ENCODE measurements at regions of chr6 and their contacts with region 1.

Region 1: DNA sequence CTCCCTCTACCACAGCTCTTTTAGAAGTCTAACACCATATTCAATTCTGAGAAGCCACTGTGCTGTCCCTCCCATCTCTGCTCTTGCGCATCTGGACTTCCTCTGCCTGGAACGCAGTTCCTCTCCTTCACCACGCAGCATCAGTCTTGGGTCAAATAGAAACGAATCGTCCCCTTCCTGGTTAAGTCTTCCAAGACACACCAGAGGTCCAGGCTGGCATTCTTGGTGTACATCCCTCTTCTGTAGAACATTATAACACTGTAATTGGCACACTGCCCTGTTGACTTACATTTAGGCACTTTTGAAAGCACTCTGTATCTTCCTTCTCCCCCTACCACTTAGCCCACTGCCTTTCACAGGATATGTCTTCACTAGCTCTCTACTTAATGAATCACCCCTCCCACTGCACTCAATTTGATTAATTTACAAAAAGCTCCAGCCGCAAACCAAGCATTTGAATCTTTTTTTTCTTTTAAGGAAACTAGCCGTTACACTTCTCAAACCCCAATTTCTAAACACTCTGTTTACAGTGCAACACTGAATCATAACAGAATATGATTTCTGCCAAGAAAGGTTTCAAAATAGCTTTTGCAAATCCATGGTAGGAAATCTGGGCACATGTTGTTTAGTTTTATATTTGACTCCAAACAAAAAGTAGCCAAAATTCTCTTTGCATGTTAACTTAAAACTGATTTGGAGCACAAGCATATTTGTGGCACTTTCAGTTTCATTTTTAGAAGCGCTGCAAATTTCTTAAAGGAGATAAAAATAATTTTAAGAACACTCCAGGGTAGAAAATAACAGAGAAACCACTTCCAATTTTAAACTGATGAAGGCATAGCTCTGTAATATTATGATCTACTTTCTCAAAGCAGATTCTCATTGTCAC is 140.7 kb upstream of the CARMIL1 start:
- DNase-seq: peak; percentile 71
- H3K4me3 Mint-ChIP-seq: peak overlapping the region; percentile 92
- H3K27ac Mint-ChIP-seq: peak overlapping the region; percentile 100
- H3K4me1 Mint-ChIP-seq: peaks cover 39% of the 10 kb centered on the region
- H3K27me3 Mint-ChIP-seq: no peaks in the 10 kb centered on the region

Region 2: DNA sequence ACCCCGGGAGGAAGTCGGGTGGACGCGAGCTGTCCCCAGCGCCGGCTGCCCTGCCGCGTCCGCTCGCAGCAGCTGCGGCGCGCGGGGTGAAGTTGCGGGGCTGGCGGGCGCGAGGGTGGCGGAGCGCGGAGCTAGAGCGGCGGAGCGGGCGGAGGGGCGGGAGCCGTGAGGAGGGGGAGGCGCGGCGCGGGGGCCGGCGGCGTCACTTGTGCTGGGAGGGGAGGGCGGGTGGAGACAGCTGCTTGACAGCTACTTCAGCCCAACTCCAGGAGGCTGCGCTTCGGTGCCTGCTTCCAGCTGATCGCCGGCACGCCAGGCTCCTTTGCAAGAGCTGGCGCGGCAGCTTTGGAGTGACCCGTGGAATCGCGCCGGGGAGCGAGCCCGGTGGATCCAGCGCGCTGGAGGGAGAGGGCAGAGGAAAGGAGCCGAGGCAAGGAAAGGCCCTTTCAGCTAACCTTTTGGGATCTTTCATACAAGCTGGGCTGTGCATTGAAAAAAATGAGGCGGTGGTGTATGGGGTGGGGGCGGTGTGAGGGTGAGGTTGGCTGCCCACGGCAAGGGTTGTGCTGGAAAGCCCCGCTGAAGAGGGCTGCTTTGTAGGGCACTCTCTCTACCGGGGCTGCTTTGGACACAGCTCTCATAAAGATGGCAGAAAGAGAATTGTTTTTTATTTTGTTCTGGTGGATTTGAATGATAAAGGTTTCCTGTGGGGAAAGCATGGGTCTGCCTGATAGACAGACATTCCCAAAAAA is 227.3 kb before region 1 on chr6:
- intact Hi-C with region 1: loop called (anchors 5 kb)
- DNase-seq: no peak
- H3K4me3 Mint-ChIP-seq: peak overlapping the region; percentile 79
- H3K27ac Mint-ChIP-seq: peak overlapping the region; percentile 61
- H3K4me1 Mint-ChIP-seq: peaks cover 70% of the 10 kb centered on the region
- H3K27me3 Mint-ChIP-seq: no peaks in the 10 kb centered on the region

Region 3: DNA sequence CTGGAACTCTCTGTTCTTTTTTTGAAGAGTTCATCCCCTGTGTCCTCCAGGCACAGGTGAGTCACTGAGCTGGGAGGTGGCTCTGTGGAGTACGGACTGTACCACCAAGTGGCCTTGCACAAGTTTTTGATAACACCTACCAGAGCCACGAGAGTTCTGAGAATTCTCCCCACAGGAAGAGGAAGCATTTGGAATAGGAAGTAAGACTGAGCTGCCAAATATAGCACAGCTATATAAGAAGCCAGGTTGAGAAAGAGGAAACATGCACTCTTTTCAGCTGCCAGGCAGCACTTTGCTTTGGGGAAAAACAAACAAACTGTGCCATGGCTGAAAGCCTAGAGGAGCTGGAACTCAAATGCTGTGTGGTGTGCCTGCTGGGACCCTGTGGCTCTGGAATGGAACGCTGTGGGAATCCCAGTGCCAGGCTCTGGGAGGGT is 131.9 kb before region 1 on chr6:
- intact Hi-C with region 1: loop called (anchors 1 kb)
- DNase-seq: peak; percentile 41
- H3K4me3 Mint-ChIP-seq: peak overlapping the region; percentile 27
- H3K27ac Mint-ChIP-seq: peak overlapping the region; percentile 83
- H3K4me1 Mint-ChIP-seq: peaks cover 68% of the 10 kb centered on the region
- H3K27me3 Mint-ChIP-seq: no peaks in the 10 kb centered on the region

Region 4: DNA sequence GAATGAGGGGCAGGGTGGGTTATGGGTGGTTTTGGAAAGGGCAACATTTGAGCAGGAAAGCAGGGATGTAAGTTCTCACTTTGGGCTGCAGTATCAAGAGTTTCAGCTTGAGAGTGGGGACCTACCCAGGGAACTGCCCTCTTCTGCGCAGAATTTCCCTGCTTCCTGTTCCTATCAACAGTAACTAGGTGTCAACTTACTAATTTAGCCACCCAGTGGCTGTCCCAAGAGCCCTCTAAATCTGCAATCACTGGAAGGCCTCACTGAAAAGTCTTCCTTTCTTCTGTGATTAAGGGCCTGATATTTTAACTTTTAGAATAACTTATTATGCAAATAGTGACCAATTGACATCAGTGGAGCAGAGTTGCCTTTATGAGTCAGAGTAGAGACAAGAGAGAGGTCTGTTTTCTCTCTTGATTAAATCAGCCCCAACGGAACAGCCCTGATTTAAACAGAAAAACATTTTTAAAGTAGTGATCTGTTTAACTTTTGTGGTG is 84.6 kb before region 1 on chr6:
- intact Hi-C with region 1: no loop called
- DNase-seq: no peak
- H3K4me3 Mint-ChIP-seq: no peak overlapping the region
- H3K27ac Mint-ChIP-seq: peak overlapping the region; percentile 73
- H3K4me1 Mint-ChIP-seq: peaks cover 69% of the 10 kb centered on the region
- H3K27me3 Mint-ChIP-seq: no peaks in the 10 kb centered on the region

Region 5: DNA sequence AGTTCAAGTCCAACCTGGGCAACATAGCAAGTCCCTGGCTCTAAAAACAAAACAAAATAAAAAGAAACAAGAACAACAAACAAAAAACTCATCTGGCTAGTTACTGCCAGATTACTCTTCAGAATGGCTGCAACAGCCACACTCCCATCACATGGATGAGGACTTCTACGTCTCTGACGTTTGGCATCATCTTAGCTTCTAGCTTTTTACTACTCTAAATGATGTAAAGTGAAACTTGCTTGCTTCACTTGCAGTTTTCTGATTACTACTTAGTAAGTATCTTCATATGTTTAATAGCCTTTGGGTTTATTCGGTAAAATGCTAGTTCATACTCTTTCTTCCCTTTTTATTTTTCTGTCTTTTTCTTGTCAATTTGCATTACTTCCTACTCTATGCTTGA is 20.4 kb before region 1 on chr6:
- intact Hi-C with region 1: loop called (anchors 2 kb)
- DNase-seq: no peak
- H3K4me3 Mint-ChIP-seq: no peak overlapping the region
- H3K27ac Mint-ChIP-seq: peak overlapping the region; percentile 78
- H3K4me1 Mint-ChIP-seq: peaks cover 53% of the 10 kb centered on the region
- H3K27me3 Mint-ChIP-seq: no peaks in the 10 kb centered on the region

Region 6: GRCh38 chr6:25179051-25179778 is 40.7 kb after region 1 on chr6:
- intact Hi-C with region 1: loop called (anchors 1 kb)
- DNase-seq: no peak
- H3K4me3 Mint-ChIP-seq: peak overlapping the region; percentile 39
- H3K27ac Mint-ChIP-seq: peak overlapping the region; percentile 86
- H3K4me1 Mint-ChIP-seq: peaks cover 64% of the 10 kb centered on the region
- H3K27me3 Mint-ChIP-seq: no peaks in the 10 kb centered on the region

Region 7: GRCh38 chr6:26020329-26021000 is 882.0 kb after region 1 on chr6:
- intact Hi-C with region 1: loop called (anchors 1 kb)
- DNase-seq: peak; percentile 84
- H3K4me3 Mint-ChIP-seq: peak overlapping the region; percentile 96
- H3K27ac Mint-ChIP-seq: peak overlapping the region; percentile 100
- H3K4me1 Mint-ChIP-seq: peaks cover 53% of the 10 kb centered on the region
- H3K27me3 Mint-ChIP-seq: no peaks in the 10 kb centered on the region

Measured in activated T-helper 2 cell treated with anti-CD3 and anti-CD28 coated beads, Interferon-gamma antibody, Interleukin-2, Interleukin-4, amounts not matched to agents 10 μg/mL and 5 μg/mL and 100 μg/mL, durations not matched to agents 14 hours and 24 hours and 36 hours (primary cell).